GM10248 (cell line): ENCODE measurements at regions of chr6 and their contacts with region 1.

Region 1: DNA sequence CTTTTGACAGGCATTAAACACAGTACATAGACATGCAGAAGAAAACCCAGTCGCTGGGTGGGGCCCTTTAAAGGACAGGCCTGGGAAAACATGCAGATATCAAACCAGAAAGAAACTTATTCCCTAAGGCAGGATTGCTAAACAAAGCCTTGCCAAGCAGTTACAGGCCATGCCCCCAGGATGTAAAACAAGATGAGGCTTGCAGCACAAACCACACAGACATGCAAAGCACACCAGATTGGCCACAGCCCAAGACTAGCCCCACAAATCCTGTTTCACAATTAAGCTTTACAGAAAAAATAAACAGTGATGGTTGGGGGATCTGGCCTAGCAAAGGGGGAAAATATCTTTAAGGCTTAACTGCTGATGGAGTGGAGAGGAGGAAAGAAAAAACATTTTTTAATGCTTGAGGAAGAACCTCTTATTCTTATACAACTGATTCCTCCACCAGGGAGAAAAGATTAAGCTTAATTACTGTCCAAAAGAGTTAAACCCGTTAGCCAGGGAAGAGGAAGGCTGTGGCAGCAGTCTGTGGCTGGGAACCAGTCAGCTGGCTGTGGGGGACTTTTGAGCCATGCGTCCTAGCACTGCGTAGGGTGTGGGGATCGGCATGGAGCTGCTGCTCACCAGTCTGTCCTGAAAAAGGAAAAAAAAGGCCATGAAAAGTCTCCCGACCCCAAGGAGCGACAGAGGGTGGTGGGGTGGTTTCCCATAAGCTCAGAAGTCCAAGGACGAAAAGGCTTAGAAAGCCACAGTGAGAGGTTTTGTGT is 28.4 kb downstream of the COL19A1 start:
- DNase-seq: no peak
- CTCF ChIP-seq: no peak

Region 2: DNA sequence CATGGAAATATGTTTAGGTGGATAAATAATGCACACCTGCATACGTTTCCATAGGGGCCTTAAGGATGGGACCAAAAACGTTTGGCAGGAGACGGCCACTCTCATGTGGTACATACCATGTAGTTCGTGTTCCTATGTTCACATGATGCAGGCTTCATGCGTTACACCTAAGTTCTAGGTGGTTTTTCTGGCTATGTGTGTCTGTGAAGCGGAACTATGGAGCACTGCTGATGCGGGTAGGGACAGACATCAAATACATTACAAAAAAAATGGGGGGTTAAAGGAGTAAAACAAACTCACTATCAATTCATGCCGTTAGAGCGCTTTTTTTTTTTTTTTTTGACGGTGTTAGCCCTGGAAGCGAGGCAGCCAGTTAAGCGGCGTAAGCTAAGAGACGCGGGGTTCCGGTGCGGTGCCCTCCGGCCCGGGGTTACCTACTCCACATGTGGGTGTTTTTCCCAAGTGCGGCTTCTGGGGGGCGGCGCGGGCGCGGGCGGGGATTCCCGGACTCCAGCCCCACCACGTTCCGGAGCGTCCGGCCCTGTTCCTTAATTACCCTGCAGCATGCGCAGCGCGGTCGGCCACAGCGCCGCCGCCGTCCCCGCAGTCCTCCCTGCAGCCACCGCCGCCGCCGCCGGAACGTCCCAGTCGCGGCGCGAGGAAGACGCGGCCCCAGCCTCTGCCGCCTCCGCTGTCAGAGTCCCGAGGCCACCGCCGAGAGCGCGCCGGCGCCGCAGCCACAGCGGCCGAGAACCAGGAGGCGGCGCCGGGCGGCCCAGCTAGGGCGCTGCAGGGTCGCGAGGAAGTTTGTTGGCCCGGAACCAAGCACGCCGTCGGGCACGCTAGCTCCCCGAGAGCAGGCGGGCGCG is 27.8 kb before region 1 on chr6:
- CTCF ChIA-PET with region 1: no interaction called
- POLR2A ChIA-PET with region 1: no interaction called
- DNase-seq: peak; percentile 71
- CTCF ChIP-seq: peak; percentile 19

Region 3: GRCh38 chr6:69907981-69908498 is 13.3 kb after region 1 on chr6:
- CTCF ChIA-PET with region 1: interaction called, 27 read pairs
- POLR2A ChIA-PET with region 1: no interaction called
- DNase-seq: no peak
- CTCF ChIP-seq: no peak